AG04450 (cell line): ENCODE measurements at regions of chr3 and their contacts with region 1.

Region 1: GRCh38 chr3:186617038-186617946 is 4.4 kb downstream of the AHSG start:
- DNase-seq: peak; percentile 93
- H3K4me3 ChIP-seq: peak overlapping the region; percentile 49
- H3K27ac ChIP-seq: no peak overlapping the region
- H3K27me3 ChIP-seq: peaks cover 12% of the 10 kb centered on the region
- CTCF ChIP-seq: peak; percentile 92

Region 2: DNA sequence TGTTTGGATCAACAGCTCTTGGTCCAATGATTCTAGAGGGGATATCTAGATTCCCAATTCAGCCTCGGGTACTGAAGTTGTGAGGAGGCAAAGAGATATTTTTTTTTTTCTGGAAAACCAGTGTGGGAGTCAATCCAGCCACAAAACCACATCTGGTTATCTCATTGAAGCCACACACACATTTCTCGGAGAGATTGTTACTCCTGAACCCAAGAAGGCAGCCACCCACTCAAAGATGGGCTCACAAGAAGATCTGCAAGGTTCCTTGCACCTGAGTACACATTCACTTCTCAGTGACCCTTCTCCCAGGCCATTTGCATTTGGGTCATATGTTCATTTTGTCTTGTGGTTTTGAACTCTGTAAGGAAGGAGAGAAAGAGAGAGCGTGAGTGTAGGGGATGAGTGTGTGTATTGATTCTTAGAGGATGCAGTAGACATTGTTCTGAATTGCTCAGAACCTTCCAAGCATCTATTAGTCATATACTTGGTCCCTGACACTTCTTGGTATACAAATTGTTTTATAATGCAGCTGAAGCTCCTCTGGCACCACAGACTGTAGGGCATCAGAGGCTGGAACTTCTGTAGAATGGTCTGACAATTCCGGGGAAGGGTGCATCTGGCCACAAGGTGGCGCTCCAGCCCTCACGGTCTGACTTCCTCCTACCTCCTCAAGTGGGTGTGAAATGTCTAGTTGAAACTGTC is 640.2 kb before region 1 on chr3:
- CTCF ChIA-PET with region 1: interaction called, 29 read pairs
- POLR2A ChIA-PET with region 1: no interaction called
- DNase-seq: peak; percentile 34
- H3K4me3 ChIP-seq: no peak overlapping the region
- H3K27ac ChIP-seq: no peak overlapping the region
- H3K27me3 ChIP-seq: no peaks in the 10 kb centered on the region
- CTCF ChIP-seq: peak; percentile 95

Region 3: DNA sequence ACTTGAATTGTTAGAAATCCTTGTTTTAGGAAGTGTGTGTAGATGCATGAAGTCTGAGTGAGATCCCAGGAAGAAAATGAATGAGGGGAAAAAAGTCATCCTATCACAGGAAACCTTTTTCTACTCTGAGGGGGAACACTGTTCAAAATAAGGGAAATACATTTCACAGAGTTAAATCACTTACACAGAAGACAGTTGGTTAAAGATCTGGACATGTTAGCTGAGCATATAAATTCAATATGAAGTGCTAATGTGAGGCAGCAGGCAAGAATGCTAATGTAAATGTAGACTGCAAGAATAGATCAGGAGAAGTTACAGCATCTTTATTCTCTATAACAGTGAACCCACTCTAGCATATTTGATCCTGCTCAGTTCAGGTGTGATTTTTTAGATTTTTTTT is 52.7 kb before region 1 on chr3:
- CTCF ChIA-PET with region 1: interaction called, 78 read pairs
- POLR2A ChIA-PET with region 1: no interaction called
- DNase-seq: no peak
- H3K4me3 ChIP-seq: no peak overlapping the region
- H3K27ac ChIP-seq: no peak overlapping the region
- H3K27me3 ChIP-seq: no peaks in the 10 kb centered on the region
- CTCF ChIP-seq: no peak

Region 4: DNA sequence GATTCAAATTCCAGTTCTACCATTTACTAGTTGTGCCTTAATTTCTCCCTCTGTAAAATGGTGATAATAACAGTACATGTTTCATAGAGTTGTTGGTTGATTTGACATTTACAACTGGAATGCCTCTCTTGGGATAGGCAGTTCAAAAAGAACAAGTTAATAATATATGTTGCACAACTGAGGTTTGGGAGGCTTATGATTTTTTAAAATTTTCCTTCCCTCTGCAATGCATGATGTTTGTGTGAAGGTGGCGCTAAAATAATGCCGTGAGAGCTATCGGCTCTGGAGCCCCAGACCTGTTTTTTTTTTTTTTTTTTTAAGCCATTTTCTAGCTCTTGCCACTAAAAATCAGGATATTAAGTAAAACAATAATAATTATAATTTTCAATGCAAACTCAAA is 28.2 kb before region 1 on chr3:
- CTCF ChIA-PET with region 1: interaction called, 113 read pairs
- POLR2A ChIA-PET with region 1: no interaction called
- DNase-seq: no peak
- H3K4me3 ChIP-seq: no peak overlapping the region
- H3K27ac ChIP-seq: no peak overlapping the region
- H3K27me3 ChIP-seq: no peaks in the 10 kb centered on the region
- CTCF ChIP-seq: peak; percentile 28

Region 5: DNA sequence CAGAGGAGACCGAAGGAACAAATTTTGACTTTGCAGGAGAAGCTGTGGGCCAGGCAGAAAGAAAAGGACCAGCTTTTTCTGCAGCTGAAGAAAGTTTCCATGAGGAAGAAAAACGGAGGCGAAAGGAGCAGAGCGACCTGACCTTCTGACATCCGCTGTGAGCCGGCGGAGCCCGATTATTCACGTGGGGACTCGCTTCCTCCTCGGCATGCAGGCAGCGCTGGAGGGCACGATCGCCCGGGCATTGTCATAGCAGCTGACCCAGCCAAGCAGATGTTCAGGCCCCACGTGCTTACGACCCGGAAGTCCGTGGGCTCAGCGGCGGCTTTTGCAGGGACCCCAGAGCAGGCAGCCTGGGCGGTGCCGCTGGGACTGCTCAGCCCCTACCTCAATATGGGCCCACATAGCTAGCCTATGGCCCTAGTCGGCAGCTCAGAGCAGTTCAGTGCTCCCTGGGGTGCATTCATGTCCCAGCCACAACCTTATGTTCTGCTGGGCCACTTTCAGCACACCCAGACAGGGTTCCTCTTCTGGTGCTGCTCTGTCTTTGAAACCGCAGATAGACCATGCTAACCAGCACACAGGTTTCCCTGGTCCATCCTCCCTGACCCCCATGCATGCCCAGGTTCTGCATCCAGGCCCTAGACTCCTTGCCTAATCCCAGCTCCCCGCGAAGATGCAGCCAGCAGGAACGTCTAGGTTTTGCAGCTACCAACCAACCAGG is 155.6 kb after region 1 on chr3:
- CTCF ChIA-PET with region 1: interaction called, 10 read pairs
- POLR2A ChIA-PET with region 1: no interaction called
- DNase-seq: no peak
- H3K4me3 ChIP-seq: peak overlapping the region; percentile 39
- H3K27ac ChIP-seq: no peak overlapping the region
- H3K27me3 ChIP-seq: no peaks in the 10 kb centered on the region
- CTCF ChIP-seq: no peak

Region 6: DNA sequence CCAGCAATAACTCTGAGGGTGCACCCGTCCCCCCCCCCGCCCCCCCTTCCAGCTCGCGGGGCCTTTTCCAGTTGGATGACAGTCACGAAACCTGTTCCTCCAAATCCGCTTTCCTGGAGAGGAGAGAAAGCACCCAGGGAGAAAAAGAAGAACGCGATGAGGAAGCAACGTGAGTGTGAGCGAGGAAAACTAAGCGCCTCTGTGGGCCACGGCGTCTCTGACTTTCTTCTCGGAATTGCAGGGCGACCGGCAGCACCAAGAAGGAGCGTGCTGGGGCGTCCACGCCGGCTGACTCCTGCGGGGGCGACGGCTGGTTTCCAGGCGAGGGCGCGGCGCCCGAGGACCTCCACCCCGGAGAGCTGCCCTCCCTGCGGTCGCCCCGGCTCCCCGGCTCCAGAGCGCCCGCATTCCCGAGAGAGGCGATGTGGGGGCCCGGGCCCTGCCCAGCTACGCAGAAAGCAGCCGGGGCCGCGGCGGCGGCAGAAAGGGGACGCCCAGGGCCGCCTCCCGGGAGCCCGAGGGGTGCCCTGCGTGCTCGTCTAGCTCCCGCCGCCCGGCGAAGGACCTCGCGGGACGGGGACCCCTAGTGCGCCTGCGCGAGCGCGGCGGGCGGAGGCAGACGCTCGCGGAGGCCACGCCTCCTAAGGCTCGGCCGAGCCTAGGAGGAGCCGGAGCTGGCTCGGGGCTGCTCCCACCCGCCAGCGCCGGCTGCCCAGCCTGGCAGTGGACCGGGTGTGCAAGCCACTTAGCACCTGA is 209.9 kb after region 1 on chr3:
- CTCF ChIA-PET with region 1: interaction called, 186 read pairs
- POLR2A ChIA-PET with region 1: no interaction called
- DNase-seq: peak; percentile 39
- H3K4me3 ChIP-seq: peak overlapping the region; percentile 62
- H3K27ac ChIP-seq: no peak overlapping the region
- H3K27me3 ChIP-seq: peaks cover 34% of the 10 kb centered on the region
- CTCF ChIP-seq: no peak